Right ventricle myocardium inferior (tissue), 1 donor: ENCODE measurements at regions of chr2 and their contacts with region 1.

Region 1: DNA sequence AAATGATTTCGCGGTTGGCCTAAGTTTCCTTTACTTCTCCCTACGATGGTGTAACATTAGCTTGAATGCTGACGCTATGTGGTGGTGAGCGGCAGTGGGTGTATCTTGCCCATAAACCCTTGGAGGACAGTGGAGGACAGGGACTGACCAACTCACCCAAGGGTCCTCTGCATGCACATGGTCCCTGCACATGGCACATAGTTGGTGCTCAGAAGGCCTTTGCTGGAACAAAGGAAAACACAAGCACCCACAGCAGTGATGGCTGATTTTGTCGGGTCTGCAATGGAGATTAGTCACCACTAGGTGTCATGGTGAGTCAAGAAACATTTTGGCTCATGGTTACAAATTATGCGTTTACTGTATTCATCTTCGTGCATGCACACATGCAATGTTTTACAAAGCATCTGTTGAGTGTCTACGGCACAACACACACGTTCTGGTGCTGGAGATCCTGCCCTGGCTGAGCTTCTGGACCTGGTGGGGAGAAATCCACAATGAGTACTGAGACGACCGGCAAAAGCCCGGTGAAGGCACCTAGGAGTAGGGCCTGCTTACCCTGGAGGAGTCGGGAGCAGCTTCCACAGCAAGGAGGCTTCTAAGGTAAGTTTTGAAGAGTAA is 44.0 kb downstream of the PDCL3 start:
- DNase-seq: no peak
- ATAC-seq: peak; percentile 32

Region 2: DNA sequence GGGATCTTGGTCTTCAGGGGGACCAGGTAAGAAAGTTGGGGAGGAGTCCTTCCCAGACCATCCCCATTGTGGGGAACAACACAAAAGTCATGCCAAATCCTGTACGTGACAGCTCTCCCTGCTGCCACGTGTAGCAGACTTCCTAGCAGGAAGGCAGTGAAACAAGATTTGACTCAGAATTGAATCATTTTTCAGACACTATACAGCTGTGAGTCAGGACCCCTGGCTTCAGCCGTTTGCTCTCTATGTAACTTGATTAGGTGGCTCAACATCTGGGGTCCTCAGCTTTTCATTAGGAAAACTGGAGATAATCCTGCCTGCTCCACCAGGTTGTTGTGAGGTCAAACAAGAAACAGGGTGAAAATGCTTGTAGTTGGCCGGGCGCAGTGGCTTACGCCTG is 76.9 kb before region 1 on chr2:
- intact Hi-C with region 1: no loop called
- DNase-seq: no peak
- ATAC-seq: no peak

Region 3: DNA sequence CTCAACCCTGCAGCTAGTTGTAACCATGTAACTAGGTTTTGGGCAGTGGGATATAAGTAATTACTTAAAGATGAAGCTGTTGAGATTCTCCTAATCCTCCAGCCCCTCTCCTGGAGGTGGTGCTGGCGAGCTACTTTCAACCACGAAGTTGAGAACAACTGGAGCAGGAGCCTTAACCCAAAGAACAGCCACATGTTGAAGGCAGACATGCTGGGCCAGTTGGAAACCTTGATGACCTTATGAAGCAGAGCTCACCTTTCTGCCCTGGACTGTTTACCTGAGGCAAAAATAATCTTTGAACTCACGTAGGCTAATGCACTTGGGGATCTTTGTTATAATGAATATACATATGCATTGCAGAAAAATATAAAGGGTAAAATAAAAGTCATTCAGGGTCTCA is 123.5 kb after region 1 on chr2:
- intact Hi-C with region 1: loop called (anchors 5 kb)
- DNase-seq: no peak
- ATAC-seq: peak; percentile 69